Activated CD8-positive, alpha-beta T cell treated with anti-CD3 and anti-CD28 coated beads for 36 hours (primary cell): ENCODE measurements at regions of chr11 and their contacts with region 1.

Region 1: GRCh38 chr11:60775420-60775961 is 9.6 kb upstream of the MS4A10 start:
- DNase-seq: peak; percentile 92
- ATAC-seq: peak; percentile 98
- H3K4me3 Mint-ChIP-seq: no peak overlapping the region
- H3K27ac Mint-ChIP-seq: no peak overlapping the region
- H3K4me1 Mint-ChIP-seq: peaks cover 11% of the 10 kb centered on the region
- H3K27me3 Mint-ChIP-seq: no peaks in the 10 kb centered on the region
- CTCF ChIP-seq: peak; percentile 78

Region 2: DNA sequence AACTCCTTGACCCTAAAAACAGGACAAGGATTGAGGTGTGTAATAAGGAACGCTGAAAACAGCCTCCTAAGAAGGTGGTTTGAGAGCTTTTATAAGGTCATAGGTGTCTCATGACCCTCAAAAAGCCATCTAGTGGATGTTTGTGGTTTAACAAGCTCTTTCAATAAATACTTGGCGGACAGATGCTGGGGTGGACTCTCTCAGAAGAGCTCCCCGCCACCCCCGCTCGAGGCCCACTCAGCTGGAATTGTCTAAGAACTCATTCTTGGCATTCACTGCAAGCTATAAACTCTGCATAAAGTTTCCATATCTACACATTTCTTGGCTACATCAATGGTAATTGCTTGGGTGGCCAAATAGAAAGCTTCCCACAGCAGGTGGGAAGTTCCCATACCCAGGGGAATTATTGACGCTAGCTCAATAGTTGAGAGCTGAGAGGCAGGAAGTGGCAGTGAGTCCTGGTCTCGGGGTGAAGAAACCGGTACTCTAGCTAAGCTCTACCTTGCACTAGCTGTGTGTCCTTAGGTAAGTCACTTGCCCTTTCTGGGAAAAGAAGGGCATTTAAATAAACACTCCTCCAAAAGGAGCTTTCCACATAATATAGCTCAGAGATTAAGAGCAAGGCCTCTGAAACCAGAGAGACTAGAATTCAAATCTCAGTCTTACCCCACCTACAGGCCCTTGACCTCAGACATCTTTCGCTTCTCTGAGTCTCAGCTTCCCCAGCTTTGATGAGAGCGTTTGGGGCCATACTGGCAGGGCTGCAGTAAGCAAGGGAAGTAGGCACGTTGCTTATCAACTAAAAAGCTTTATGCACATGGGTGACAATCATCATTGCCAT is 12.4 kb before region 1 on chr11:
- CTCF ChIA-PET with region 1: interaction called, 116 read pairs
- POLR2A ChIA-PET with region 1: no interaction called
- intact Hi-C with region 1: no loop called
- DNase-seq: no peak
- ATAC-seq: peak; percentile 39
- H3K4me3 Mint-ChIP-seq: no peak overlapping the region
- H3K27ac Mint-ChIP-seq: no peak overlapping the region
- H3K4me1 Mint-ChIP-seq: no peaks in the 10 kb centered on the region
- H3K27me3 Mint-ChIP-seq: peaks cover 27% of the 10 kb centered on the region
- CTCF ChIP-seq: no peak

Region 3: GRCh38 chr11:60785806-60786361 is 10.4 kb after region 1 on chr11:
- CTCF ChIA-PET with region 1: interaction called, 23 read pairs
- POLR2A ChIA-PET with region 1: interaction called, 4 read pairs
- intact Hi-C with region 1: no loop called
- DNase-seq: no peak
- ATAC-seq: no peak
- H3K4me3 Mint-ChIP-seq: no peak overlapping the region
- H3K27ac Mint-ChIP-seq: no peak overlapping the region
- H3K4me1 Mint-ChIP-seq: no peaks in the 10 kb centered on the region
- H3K27me3 Mint-ChIP-seq: no peaks in the 10 kb centered on the region
- CTCF ChIP-seq: no peak

Region 4: GRCh38 chr11:60791153-60791933 is 15.9 kb after region 1 on chr11:
- CTCF ChIA-PET with region 1: interaction called, 23 read pairs
- POLR2A ChIA-PET with region 1: no interaction called
- intact Hi-C with region 1: no loop called
- DNase-seq: no peak
- ATAC-seq: no peak
- H3K4me3 Mint-ChIP-seq: no peak overlapping the region
- H3K27ac Mint-ChIP-seq: no peak overlapping the region
- H3K4me1 Mint-ChIP-seq: no peaks in the 10 kb centered on the region
- H3K27me3 Mint-ChIP-seq: no peaks in the 10 kb centered on the region
- CTCF ChIP-seq: no peak